ENCODE measurements at regions of chr10 and their contacts with region 1.

Region 1: GRCh38 chr10:35336084-35336831 is at the start of gene CCNY:
- DNase-seq: peak; percentile 85
- H3K4me3 Mint-ChIP-seq: peak within 1 kb of the TSS; percentile 86
- H3K27ac Mint-ChIP-seq: peak within 1 kb of the TSS; percentile 87
- H3K4me1 Mint-ChIP-seq: peaks cover 68% of the 10 kb centered on the region
- H3K27me3 Mint-ChIP-seq: no peaks in the 10 kb centered on the region
- total RNA-seq, gene CCNY: 34.6 to 36.2 TPM

Region 2: DNA sequence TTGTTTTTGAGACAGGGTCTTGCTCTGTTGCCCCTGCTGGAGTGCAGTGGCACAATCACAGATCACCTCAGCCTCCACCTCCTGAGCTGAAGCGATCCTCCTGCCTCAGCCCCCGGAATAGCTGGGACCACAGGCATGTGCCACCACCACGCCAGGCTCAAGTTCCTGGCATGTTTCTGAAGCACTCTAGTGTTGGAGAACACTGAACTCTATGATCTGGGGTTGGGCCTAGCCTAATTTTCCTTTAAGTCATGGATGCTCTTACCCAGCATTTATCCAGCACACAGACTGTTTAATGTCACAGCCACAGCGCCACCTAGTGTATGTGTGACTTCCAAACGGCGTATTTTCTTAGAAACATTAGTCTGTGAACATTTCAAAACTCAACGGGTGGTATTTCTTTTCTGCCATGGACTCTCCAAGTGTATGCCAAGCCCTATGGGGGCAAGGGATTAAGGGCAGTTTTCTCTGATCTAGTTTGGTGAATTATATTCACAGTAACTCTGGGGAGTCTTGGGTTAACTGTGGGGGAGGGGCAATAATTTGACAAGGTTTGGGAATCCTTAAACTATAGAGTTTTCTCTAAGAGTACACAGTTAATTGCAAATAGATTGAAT is 117.8 kb before region 1 on chr10:
- CTCF ChIA-PET with region 1: no interaction called
- POLR2A ChIA-PET with region 1: no interaction called
- intact Hi-C with region 1: loop called (anchors 2 kb)
- DNase-seq: peak; percentile 90
- H3K4me3 Mint-ChIP-seq: peak overlapping the region; percentile 43
- H3K27ac Mint-ChIP-seq: peak overlapping the region; percentile 81
- H3K4me1 Mint-ChIP-seq: peaks cover 48% of the 10 kb centered on the region
- H3K27me3 Mint-ChIP-seq: no peaks in the 10 kb centered on the region

Region 3: DNA sequence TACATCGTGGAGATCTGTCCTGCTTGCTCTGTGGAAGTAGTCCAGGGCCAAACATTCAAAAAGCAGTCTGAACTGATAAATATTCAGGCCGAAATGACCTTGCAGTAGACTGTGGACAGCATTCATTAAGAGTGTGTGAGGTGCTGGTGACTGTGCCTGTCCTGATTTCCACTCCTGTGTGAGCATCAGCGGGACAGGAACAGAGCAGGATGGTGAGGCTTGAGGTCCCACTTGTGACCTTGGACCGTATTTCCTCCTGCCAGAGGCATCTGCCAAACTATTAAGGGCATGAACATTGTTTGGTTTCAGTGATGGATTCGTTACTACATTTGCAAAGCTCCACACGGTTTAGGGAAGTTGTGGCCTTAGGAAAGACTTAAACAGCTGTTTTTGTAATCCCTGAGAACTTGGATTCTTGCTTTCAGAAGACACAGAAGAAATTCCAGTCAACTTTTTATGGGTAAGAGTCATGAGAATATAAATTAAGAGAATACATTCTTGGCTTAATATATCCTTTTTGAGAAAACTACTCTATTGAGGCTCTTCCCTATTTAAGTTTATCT is 32.9 kb after region 1 on chr10:
- CTCF ChIA-PET with region 1: no interaction called
- POLR2A ChIA-PET with region 1: no interaction called
- intact Hi-C with region 1: no loop called
- DNase-seq: no peak
- H3K4me3 Mint-ChIP-seq: no peak overlapping the region
- H3K27ac Mint-ChIP-seq: no peak overlapping the region
- H3K4me1 Mint-ChIP-seq: peaks cover 60% of the 10 kb centered on the region
- H3K27me3 Mint-ChIP-seq: no peaks in the 10 kb centered on the region

Region 4: GRCh38 chr10:35379226-35380137 is 43.2 kb after region 1 on chr10:
- CTCF ChIA-PET with region 1: no interaction called
- POLR2A ChIA-PET with region 1: no interaction called
- intact Hi-C with region 1: loop called (anchors 2 kb)
- DNase-seq: peak; percentile 19
- H3K4me3 Mint-ChIP-seq: no peak overlapping the region
- H3K27ac Mint-ChIP-seq: no peak overlapping the region
- H3K4me1 Mint-ChIP-seq: peaks cover 68% of the 10 kb centered on the region
- H3K27me3 Mint-ChIP-seq: no peaks in the 10 kb centered on the region

Region 5: GRCh38 chr10:35540296-35541164 is 204.3 kb after region 1 on chr10:
- CTCF ChIA-PET with region 1: no interaction called
- POLR2A ChIA-PET with region 1: no interaction called
- intact Hi-C with region 1: loop called (anchors 2 kb)
- DNase-seq: no peak
- H3K4me3 Mint-ChIP-seq: no peak overlapping the region
- H3K27ac Mint-ChIP-seq: peak overlapping the region; percentile 56
- H3K4me1 Mint-ChIP-seq: peaks cover 29% of the 10 kb centered on the region
- H3K27me3 Mint-ChIP-seq: no peaks in the 10 kb centered on the region

Measured in activated CD4-positive, alpha-beta memory T cell treated with anti-CD3 and anti-CD28 coated beads for 36 hours (primary cell).